Activated T-helper 2 cell treated with anti-CD3 and anti-CD28 coated beads, Interferon-gamma antibody, Interleukin-2, Interleukin-4, amounts not matched to agents 10 μg/mL and 5 μg/mL and 100 μg/mL, durations not matched to agents 14 hours and 24 hours and 36 hours (primary cell): ENCODE measurements at regions of chr4 and their contacts with region 1.

Region 1: DNA sequence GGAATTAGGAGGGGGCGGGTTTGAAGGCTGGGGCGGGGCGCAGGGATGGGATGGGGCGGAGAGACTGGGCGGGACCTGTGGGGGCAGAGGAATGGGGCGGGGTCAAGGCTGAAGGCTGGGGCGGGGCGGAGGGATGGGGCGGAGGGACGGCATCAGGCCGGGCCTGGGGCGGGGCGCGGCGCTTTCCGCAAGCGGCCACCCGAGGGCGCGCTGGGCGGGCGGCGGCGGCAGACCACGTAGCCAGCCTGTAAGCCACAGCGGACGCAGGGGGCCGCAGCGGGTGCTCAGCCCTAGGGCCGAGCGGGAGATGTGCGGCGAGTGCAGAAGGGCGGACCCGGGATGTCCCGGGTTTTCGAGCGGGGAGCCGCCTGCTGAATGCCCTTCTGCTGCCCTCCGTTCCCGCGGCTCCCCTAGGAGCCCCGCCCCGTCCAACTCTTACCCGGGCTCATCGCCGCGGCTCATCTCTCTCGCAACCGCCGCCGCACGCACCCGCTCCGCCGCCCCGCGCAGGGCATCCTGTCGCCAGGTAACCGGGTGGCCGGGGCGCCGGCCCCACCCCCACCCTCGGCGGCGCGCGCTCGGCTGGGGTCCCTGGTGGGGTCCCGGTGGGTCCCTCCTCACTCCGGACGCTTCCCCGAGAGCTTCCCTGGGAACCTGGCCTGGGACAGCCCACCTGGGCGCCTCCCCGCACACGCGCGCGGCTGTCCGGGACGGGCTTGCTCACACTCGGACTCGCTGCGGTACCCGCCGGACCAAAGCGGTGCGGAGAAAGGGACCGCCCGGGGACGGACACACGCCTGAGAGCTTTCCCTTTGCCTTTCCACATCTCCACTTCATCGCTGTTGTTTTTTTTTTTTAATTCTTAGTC is at the start of gene CCDC110:
- DNase-seq: peak; percentile 79
- H3K4me3 Mint-ChIP-seq: peak within 1 kb of the TSS; percentile 88
- H3K27ac Mint-ChIP-seq: no peak within 1 kb of the TSS
- H3K4me1 Mint-ChIP-seq: peaks cover 8% of the 10 kb centered on the region
- H3K27me3 Mint-ChIP-seq: peaks cover 44% of the 10 kb centered on the region
- total RNA-seq, gene CCDC110: not detected in 2 replicates

Region 2: DNA sequence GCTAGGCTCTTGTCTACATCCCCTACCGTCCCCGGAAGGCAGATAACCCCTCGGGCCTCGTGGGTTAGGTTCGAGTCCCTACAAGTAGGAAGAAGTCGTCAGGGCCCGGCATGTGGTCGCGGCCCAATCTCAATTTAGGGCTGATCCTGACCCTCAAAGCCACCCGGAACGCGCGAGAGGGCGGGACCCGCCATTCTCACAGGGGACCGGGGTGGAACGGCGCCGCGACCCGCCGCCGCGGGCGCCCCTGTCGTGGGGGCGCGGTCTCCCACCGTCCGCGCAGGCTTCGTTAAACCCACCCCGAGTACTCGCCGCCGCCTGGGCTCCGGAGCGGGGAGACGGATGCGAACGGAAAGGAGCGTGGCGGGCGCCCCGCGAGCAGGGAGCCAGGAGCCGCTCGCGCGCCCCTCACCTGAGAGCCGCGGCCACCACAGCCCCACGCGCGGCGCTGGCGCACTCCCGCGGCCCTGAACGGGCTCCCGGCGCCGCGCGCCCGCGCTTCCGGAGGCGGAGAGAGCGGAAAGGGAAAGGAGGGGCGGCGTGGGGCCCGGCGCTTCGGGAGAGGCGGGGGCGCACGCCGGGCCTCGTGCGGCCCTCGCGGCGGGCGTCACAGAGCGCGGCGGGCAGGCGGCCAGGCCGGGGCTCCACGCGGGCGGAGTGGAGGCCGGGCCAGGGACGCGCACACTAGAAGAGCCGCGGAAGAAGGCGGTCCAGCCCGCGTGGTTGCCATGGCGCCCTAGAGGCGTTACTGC is 267.8 kb before region 1 on chr4 and contains the start of gene CFAP97:
- intact Hi-C with region 1: loop called (anchors 2 kb)
- DNase-seq: peak; percentile 71
- H3K4me3 Mint-ChIP-seq: peak within 1 kb of the TSS; percentile 98
- H3K27ac Mint-ChIP-seq: peak within 1 kb of the TSS; percentile 99
- H3K4me1 Mint-ChIP-seq: peaks cover 30% of the 10 kb centered on the region
- H3K27me3 Mint-ChIP-seq: peaks cover 5% of the 10 kb centered on the region
- total RNA-seq, gene CFAP97: 44.1 and 46.9 TPM in 2 replicates

Region 3: DNA sequence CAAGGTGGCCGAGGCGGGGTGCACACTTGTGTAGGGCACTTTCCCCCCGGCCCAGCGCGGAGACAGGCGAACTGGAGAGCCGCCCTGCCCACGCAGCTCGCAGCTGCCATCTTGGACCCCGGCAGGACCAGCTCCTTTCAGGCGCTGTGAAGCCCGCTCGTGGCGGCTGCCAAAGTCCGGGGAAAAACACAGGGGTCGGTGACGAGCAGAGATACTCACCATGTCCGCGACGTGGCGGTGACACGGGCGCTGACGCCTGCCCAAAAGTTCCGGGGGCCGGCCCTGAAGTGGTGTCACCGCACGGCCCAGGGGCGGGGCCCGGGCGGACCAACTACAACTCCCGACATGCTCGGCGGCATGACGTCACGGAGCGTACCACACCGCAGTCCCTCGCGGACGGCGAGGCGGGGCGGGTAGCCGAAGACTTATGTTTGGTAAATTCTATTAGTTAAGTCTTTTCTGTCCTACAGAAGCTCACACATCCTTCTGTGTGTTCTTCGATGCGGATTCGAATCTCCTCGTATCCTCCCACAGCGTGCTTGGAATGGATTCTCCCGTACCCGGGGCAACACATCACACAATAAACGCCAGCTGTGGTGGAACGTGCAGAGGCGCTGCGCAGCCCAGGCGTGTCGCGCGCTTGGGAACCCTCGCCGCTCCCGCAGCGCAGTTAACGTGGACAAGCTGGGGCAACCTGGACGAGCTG is 45.7 kb before region 1 on chr4 and contains the start of gene UFSP2:
- intact Hi-C with region 1: loop called (anchors 1 kb)
- DNase-seq: peak; percentile 86
- H3K4me3 Mint-ChIP-seq: peak within 1 kb of the TSS; percentile 90
- H3K27ac Mint-ChIP-seq: peak within 1 kb of the TSS; percentile 86
- H3K4me1 Mint-ChIP-seq: peaks cover 24% of the 10 kb centered on the region
- H3K27me3 Mint-ChIP-seq: peaks cover 3% of the 10 kb centered on the region
- total RNA-seq, gene UFSP2: 26.4 and 34.5 TPM in 2 replicates

Region 4: GRCh38 chr4:185504098-185505047 is 32.9 kb after region 1 on chr4:
- intact Hi-C with region 1: no loop called
- DNase-seq: no peak
- H3K4me3 Mint-ChIP-seq: no peak overlapping the region
- H3K27ac Mint-ChIP-seq: no peak overlapping the region
- H3K4me1 Mint-ChIP-seq: no peaks in the 10 kb centered on the region
- H3K27me3 Mint-ChIP-seq: peaks cover 13% of the 10 kb centered on the region

Region 5: GRCh38 chr4:185597532-185598188 is 126.2 kb after region 1 on chr4:
- intact Hi-C with region 1: loop called (anchors 2 kb)
- DNase-seq: peak; percentile 35
- H3K4me3 Mint-ChIP-seq: no peak overlapping the region
- H3K27ac Mint-ChIP-seq: no peak overlapping the region
- H3K4me1 Mint-ChIP-seq: no peaks in the 10 kb centered on the region
- H3K27me3 Mint-ChIP-seq: peaks cover 14% of the 10 kb centered on the region

Region 6: DNA sequence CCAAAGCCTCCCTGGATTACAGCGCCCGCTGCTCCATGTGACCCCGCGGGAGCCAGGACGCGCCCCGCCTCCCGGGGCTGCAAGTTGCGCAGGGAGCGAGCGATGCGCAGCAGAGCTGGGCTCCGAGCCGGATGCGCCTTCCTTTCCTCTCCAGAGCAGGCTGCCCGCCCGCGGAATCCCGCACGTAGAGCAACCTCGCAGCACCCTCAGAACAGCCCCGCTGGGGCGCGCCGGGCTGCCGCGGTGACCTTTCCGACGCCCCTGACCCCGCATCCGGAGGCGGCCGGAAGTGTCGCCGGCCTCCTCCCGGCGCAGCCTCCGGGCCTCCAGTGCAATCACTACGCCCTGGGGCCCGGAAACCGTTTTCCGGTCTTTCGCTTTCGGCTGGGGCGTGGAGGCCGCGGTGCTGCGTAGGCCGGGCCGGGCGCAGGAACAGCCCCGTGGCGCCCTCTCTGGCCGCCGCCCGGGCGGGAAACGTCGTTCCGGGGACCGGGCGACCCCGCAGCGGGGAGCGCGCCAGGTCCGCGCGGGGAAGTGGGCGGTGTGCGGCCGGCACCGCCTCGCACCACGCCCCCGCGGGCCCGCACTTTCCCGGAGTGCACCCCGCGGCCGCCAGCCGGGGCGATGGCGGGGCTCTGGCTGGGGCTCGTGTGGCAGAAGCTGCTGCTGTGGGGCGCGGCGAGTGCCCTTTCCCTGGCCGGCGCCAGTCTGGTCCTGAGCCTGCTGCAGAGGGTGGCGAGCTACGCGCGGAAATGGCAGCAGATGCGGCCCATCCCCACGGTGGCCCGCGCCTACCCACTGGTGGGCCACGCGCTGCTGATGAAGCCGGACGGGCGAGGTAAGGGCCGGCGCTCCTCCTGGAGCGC is 720.0 kb after region 1 on chr4 and contains the start of gene CYP4V2:
- intact Hi-C with region 1: loop called (anchors 5 kb)
- DNase-seq: peak; percentile 90
- H3K4me3 Mint-ChIP-seq: peak within 1 kb of the TSS; percentile 93
- H3K27ac Mint-ChIP-seq: peak within 1 kb of the TSS; percentile 91
- H3K4me1 Mint-ChIP-seq: peaks cover 21% of the 10 kb centered on the region
- H3K27me3 Mint-ChIP-seq: peaks cover 1% of the 10 kb centered on the region
- total RNA-seq, gene CYP4V2: 8.5 and 8.9 TPM in 2 replicates